Left cardiac atrium (tissue), 4 donors: ENCODE measurements at regions of chr7 and their contacts with region 1.

Region 1: GRCh38 chr7:98021588-98022351 is 31.8 kb upstream of the OCM2 start:
- DNase-seq: peak; percentile 77
- ATAC-seq: peak; percentile 87 to 90

Region 2: DNA sequence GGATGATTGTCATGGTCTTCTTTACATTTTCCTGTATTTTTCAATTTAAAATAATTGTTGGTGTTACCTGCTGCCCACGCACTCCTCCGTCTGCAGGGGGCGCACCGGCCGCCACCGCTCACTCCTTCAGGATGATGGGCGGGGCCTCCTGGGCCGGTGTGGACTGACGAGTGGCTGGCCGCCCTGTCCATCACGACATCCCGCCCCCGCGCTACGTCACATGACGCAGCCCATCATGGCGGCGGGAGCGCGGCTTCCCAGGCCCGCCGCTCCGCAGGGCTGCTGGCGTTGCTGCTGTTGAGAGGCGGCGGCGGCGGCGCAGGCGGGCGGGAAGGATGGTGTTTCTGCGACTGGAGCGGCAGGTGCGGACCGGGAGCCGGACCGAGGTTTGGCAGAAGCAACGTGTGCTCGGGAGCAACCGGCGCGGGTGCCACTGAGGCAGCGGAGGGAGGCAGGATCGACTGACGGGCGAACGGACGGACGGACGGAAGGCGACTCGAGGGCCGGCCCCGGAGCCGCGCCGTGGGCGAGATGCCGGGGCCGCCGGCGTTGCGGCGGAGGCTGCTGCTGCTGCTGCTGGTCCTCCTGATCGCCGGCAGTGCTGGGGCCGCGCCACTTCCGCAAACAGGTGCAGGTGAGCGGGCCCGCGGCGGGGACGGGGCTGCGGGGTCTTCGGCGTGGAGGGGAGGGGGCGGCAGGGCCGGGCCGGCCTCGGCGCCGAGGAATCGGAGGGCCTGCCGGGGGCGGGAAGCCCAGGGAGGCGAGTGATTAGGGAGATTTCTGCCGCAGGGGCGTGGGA is 85.1 kb after region 1 on chr7 and contains the start of gene LMTK2:
- intact Hi-C with region 1: loop called in 1 of 2 experiments (anchors 10 kb)
- DNase-seq: peak; percentile 96
- ATAC-seq: peak; percentile 100
- total RNA-seq, gene LMTK2: 26.7 to 28.4 TPM

Region 3: GRCh38 chr7:98168181-98168905 is 146.6 kb after region 1 on chr7:
- intact Hi-C with region 1: loop called (anchors 2 to 5 kb)
- DNase-seq: peak; percentile 39
- ATAC-seq: peak; percentile 50 to 53

Region 4: GRCh38 chr7:98240961-98241674 is 219.3 kb after region 1 on chr7:
- intact Hi-C with region 1: loop called in 1 of 2 experiments (anchors 5 kb)
- DNase-seq: no peak
- ATAC-seq: peak; percentile 46 to 70

Region 5: DNA sequence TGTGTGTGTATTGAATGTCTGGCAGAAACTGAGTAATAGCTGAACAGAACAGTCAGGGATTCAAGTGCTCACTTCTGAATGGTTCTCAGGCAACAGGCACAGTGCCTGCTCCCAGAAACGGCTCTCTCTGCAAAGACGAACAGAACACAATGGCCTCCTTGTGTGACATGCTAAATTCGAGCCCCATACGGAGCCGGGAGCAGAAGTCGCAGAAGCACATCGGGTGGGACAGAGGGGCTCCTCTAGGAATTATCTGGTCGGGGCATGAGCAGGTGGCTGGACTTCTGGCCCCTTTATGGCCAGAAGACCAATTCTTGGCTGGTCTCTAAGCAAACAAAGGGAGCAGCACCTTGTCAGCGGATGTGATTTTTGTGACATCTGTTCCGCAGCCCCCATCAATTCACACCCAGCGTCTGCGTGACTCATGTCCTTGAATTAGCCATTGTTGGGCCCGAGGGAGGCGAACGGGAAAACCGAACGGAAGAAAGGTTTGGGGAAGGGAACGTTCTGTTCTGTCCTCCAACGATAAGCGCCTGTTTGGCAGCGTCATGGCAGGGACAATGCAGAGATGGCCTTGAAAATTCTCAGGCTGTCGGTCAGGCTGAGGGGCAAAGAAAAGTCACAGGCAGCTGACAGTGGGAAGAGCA is 548.0 kb after region 1 on chr7:
- intact Hi-C with region 1: no loop called
- DNase-seq: peak; percentile 22
- ATAC-seq: peak in 1 of 2 donors; percentile 51